Activated naive CD8-positive, alpha-beta T cell treated with anti-CD3 and anti-CD28 coated beads, Interleukin-2, amount 10 ng/mL, durations not matched to agents 7 days and 5 days (primary cell): ENCODE measurements at regions of chr6 and their contacts with region 1.

Region 1: DNA sequence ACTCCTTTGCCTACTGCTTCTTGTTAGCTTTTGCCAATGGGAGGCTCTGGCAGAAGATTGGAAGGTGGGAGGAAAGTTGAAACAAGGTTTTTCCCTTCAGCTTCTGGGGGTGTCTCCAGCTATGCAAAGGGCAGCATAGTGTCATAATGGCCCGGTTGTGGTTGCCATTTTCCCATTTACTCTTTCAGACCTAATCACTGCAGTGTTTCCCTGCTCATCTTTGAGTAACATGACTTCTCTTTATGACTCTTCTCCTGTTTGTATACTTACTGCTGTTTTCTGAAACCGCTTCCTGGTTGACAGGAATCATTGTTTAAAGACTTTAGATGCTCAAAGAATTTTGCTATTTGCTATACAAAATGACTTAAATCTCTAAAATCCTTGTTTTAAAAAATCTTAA is 19.9 kb downstream of the NRN1 start:
- DNase-seq: no peak
- ATAC-seq: peak; percentile 26
- H3K4me3 Mint-ChIP-seq: no peak overlapping the region
- H3K27ac Mint-ChIP-seq: no peak overlapping the region
- H3K4me1 Mint-ChIP-seq: peaks cover 65% of the 10 kb centered on the region
- H3K27me3 Mint-ChIP-seq: peaks cover 12% of the 10 kb centered on the region

Region 2: GRCh38 chr6:5956939-5957338 is 29.9 kb before region 1 on chr6:
- POLR2A ChIA-PET with region 1: no interaction called
- DNase-seq: no peak
- ATAC-seq: no peak
- H3K4me3 Mint-ChIP-seq: no peak overlapping the region
- H3K27ac Mint-ChIP-seq: no peak overlapping the region
- H3K4me1 Mint-ChIP-seq: no peaks in the 10 kb centered on the region
- H3K27me3 Mint-ChIP-seq: peaks cover 40% of the 10 kb centered on the region

Region 3: DNA sequence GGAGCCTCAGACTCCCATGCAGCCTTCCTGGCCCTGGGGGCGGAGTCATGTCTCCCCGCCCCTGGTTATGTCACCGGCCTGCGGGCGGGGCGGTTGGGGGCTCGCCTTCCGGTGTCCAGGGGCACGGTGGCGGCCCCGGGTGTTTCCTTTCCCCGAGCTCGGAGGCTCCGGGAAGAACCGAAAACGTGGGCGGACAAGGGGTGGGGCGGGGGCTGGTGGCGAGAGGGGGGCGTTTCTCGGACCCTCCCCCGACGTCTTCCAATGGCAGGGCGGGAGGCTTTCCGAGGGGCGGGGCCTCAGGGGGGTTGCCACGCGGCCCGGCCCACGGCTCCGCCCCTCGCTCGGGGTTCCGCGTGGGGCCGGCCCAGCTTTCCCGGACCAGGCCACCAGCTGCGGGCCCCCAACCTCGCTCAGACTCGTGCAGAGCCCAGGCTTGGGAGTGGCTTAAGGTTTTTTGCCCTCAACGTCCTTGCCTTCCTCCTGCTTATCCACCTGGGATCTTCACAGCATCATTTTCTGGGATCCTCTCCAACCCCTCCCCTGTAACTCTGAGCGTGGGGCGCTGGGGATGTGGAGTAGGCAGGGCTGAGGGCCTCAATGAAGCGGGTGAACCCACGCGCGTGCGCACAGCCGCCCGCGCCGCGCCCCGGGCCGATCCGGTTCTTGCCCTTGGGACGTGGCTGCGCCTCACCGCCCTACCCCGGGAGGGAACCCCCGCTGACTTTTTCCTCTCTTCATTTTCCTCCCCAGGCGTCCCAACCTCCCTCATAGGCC is 22.0 kb after region 1 on chr6:
- POLR2A ChIA-PET with region 1: interaction called, 11 read pairs
- DNase-seq: peak; percentile 91
- ATAC-seq: peak; percentile 65
- H3K4me3 Mint-ChIP-seq: peak overlapping the region; percentile 91
- H3K27ac Mint-ChIP-seq: peak overlapping the region; percentile 94
- H3K4me1 Mint-ChIP-seq: peaks cover 40% of the 10 kb centered on the region
- H3K27me3 Mint-ChIP-seq: peaks cover 70% of the 10 kb centered on the region